ENCODE measurements at regions of chr2 and their contacts with region 1.

Region 1: GRCh38 chr2:69961496-69961895 is at the start of gene ASPRV1:
- DNase-seq: no peak
- ATAC-seq: no peak
- H3K4me3 ChIP-seq: no peak within 1 kb of the TSS
- H3K27ac ChIP-seq: no peak within 1 kb of the TSS
- H3K4me1 ChIP-seq: no peaks in the 10 kb centered on the region
- H3K27me3 ChIP-seq: no peaks in the 10 kb centered on the region
- CTCF ChIP-seq: no peak
- total RNA-seq, gene ASPRV1: 0.42 to 1.8 (median 0.93) TPM

Region 2: DNA sequence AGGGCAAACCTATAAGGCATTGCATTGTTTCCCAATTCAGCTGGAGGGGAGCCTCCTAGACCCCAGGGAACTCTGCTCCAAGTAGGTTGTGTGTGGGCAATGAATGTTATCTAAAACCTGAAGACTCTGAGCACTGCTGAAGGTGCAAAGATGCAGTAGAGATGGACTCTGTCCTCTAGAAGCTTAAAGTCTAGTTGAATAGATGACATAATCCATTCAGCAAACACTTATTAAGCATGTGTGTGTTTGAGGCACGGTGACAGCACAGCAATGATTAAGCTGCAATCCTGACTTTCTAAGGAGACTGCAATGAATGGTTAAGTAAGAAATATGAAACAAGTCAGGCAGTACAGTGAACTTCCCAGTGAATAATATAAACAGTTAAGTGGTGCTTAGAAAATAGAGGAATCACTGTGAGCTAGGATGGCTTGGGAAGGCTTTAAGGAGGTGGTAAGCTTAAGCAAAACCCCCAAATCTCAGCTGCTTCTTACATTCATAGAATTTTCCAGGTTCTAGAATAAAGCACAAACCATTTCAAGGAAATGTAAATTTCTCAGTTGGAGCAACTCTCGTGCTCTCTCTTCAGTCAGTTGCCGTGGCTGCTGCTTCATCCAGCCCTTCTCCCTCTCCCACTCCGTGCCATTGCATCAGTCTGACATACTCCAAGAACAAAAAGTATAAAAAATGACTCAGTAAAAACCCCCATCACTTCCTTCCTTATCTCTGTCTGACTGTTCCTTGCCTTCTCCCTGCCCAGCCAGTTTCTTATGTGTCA is 27.5 kb before region 1 on chr2:
- intact Hi-C with region 1: no loop called
- DNase-seq: no peak
- ATAC-seq: no peak
- H3K4me3 ChIP-seq: no peak overlapping the region
- H3K27ac ChIP-seq: no peak overlapping the region
- H3K4me1 ChIP-seq: peaks cover 18% of the 10 kb centered on the region
- H3K27me3 ChIP-seq: no peaks in the 10 kb centered on the region
- CTCF ChIP-seq: no peak

Region 3: DNA sequence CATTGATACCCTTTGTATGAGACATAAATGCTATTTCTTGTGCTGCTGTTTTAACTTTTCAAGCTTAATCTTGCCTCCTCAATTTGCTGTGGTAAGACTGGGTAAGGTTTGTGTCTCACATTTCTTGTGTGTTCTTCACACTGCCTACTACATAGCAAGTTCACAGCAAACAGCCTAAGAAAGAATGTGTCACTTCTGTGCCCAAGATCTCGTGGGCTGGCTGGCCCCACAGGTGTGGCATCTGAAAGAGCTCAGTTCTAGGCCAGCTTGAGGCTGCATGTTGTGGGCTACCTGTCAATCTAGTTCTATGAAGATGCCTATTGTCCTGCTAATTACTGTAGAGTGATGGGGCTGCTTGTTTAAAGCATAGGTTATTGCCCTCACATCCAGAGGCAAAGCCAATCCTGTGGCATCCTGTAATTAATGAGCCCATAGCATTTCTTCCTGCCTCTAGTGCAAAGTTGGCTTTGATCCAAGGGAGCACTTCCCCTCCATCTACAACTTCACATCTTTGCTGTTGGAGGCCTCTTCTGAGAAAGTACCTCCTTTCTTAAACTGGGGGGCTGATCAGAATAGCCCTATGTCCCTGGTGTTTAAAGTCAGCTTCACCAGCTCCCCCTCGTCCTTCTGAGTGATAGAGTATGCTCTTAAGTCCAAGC is 40.9 kb after region 1 on chr2:
- intact Hi-C with region 1: loop called in 1 of 2 experiments (anchors 5 kb)
- DNase-seq: no peak
- ATAC-seq: no peak
- H3K4me3 ChIP-seq: no peak overlapping the region
- H3K27ac ChIP-seq: no peak overlapping the region
- H3K4me1 ChIP-seq: no peaks in the 10 kb centered on the region
- H3K27me3 ChIP-seq: no peaks in the 10 kb centered on the region
- CTCF ChIP-seq: no peak